ENCODE measurements at regions of chr7 and their contacts with region 1.

Region 1: GRCh38 chr7:151954866-151955820 is 1.1 kb upstream of the GALNTL5 start:
- DNase-seq: peak in 1 of 2 donors; percentile 92
- H3K4me3 ChIP-seq: peak overlapping the region; percentile 6 to 24
- H3K27ac ChIP-seq: peak overlapping the region; percentile 58
- H3K4me1 ChIP-seq: peaks cover 6% of the 10 kb centered on the region
- H3K27me3 ChIP-seq: peaks cover 2% of the 10 kb centered on the region
- CTCF ChIP-seq: no peak
- POLR2A ChIP-seq: no peak

Region 2: DNA sequence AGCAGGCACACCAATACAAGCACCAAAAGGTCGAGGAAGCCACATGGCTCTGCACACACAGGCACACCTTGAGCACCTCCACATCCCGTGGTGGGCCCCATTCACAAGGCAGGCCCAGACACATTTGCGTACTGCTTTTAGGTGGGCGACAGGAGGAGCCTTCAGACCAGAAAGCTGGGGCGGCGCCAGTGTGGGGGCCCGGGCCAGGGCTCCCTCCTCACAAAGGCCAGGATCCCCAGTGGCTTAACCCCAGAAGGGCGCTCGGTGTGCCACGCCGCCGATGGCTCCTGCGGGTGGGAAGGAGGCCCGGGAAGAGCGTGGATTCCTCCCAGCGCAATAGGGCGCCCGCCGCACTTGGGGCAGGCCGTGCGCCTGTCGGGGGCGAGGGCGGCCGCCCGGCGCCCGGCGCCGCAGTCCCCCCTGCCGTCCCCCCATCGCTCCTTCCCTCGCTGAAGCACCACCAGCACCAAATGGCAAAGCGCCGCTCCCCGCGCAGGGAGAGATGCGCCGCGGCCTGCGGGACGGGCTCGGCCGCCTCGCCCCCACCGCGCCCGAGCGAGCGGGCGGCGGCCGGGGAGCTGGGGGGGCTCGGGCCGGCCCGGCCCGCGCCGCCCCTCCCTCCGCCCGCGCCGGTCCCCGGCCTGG is 703.7 kb before region 1 on chr7:
- intact Hi-C with region 1: loop called (anchors 2 kb)
- DNase-seq: no peak
- H3K4me3 ChIP-seq: peak overlapping the region; percentile 61 to 69
- H3K27ac ChIP-seq: peak overlapping the region; percentile 94
- H3K4me1 ChIP-seq: peaks cover 53% of the 10 kb centered on the region
- H3K27me3 ChIP-seq: no peaks in the 10 kb centered on the region
- CTCF ChIP-seq: no peak
- POLR2A ChIP-seq: no peak

Region 3: DNA sequence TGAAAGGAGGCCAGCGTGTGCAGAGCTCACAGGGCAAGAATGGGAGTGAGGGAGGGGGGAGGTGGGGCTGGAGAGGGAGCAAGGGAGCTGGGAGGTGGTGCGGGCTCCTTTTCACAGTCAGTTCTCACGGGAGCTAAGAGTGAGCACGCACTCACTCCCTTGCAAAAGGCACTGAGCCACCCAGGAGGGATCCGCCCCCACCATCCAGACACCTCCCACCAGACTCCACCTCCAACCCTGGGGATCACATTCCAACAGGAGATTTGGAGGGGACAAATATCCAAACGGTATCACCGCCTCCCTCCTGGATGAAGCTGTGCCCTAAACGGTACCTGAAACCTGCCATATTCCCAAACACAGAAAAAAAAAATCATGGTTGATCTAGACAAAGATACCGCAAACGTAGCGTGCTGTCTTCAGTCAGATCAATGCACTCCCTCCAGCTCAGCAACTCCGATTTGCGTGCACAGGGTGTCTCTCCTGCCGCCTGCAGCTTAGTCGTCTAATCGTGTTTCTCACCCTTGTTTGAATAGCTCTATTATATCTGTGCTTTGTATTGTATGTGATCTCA is 57.9 kb before region 1 on chr7:
- intact Hi-C with region 1: no loop called
- DNase-seq: no peak
- H3K4me3 ChIP-seq: no peak overlapping the region
- H3K27ac ChIP-seq: no peak overlapping the region
- H3K4me1 ChIP-seq: peaks cover 6% of the 10 kb centered on the region
- H3K27me3 ChIP-seq: no peaks in the 10 kb centered on the region
- CTCF ChIP-seq: no peak
- POLR2A ChIP-seq: no peak

Region 4: DNA sequence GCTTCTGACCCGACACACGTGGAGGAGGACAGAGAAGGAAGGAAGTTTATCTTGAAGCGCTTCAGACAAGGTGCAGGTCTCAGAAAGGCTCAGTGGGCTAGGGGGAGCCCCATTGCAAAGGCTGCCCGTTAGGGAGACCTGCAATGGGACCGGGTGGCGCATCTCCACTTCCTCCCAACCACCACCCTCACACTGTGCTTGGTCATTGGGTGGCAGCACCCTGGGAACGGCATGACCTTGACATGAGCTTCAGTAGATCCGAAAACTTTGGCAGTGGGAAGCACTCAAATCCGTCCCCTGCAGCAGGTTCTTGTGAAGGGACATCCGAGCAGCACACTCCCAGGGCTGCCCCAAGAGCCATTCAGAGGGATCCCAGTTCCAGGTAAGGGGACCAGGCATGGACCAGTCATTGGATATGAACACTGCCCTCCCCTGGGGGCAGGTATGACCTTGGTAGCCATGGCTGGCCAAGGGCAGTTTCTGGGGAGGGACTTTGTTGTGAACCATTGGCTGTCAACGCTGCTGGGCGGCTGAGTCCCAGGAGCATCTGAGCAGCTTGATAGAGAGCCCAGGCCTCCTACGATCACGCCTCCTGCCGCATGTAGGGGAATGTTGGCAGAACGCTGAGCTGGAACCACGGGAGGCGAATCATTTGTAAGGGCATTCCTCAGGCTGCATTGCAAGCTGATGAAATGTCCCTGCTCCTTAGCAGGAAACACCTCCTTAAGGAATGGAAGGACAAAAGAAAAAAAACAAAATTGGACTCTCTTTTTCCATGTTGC is 32.8 kb after region 1 on chr7:
- intact Hi-C with region 1: no loop called
- DNase-seq: no peak
- H3K4me3 ChIP-seq: no peak overlapping the region
- H3K27ac ChIP-seq: no peak overlapping the region
- H3K4me1 ChIP-seq: no peaks in the 10 kb centered on the region
- H3K27me3 ChIP-seq: no peaks in the 10 kb centered on the region
- CTCF ChIP-seq: no peak
- POLR2A ChIP-seq: no peak

Region 5: DNA sequence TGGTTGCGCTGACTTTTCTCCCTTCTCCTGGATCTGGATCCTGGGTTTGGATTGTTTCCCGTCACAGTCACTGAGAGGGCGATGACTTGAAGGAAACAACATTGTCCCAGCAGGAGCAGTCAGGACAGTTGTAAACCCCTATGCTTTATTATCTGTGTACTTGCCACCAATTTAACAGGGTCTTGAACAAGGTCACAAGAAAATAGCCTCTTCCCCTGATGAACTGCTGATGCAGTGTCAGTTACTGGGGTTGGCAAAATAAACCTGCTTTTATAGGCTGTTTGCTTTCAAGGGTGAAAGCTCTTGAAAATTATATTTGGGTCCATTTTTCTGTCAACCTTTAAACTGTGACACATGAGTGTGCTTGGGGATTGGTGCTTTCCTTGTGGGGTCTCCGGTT is 1043.3 kb after region 1 on chr7:
- intact Hi-C with region 1: no loop called
- DNase-seq: no peak
- H3K4me3 ChIP-seq: no peak overlapping the region
- H3K27ac ChIP-seq: no peak overlapping the region
- H3K4me1 ChIP-seq: no peaks in the 10 kb centered on the region
- H3K27me3 ChIP-seq: no peaks in the 10 kb centered on the region
- CTCF ChIP-seq: no peak
- POLR2A ChIP-seq: no peak